Activated T-helper 1 cell treated with anti-CD3 and anti-CD28 coated beads, Interleukin-12 subunit alpha, Interleukin-12 subunit beta, Interleukin-2, Interleukin-4 antibody, amounts not matched to agents 30 ng/mL and 10 ng/mL and 1 ng/mL, durations not matched to agents 14 hours and 24 hours and 36 hours (primary cell): ENCODE measurements at regions of chr11 and their contacts with region 1.

Region 1: DNA sequence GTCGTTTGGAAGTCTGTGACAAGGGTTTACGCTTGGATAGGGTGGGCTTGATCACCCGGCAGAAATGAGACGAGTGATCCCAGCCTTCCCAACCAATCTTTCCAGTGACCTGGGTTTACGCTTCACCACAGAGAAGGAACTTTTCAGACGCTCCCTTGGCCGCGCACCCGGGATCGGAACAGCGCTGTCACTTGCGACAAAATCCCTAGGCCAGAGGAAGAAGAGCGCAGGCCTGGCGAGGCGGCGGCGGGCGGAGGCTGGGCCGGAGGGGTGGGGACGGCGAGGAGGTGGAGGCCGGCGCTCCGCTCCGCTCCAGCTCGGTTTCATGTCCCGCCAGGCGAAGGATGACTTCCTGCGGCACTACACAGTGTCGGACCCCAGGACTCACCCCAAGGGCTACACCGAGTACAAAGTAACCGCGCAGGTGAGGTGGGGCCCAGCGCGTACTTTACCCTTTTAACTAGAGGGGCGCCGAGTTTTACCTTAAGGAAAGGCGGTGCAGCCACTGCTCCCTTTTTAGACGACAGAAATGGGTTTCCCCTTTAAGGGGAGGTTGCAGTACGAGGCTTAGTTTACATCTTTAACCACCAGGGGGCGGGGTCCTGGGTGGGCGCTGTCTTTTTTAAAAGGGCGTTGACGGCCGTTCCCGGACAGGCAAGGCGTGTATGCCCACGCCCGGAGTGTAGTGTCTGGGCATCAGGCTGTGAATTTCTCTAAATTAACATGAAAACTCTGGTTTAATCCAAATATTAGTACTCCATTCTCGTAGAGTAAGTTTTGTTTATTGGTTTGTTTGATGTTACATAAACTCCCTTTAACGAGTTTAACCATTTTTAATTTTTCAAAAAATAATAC is at the start of gene SNX15:
- DNase-seq: peak; percentile 91
- H3K4me3 Mint-ChIP-seq: peak within 1 kb of the TSS; percentile 83
- H3K27ac Mint-ChIP-seq: peak within 1 kb of the TSS; percentile 83
- H3K4me1 Mint-ChIP-seq: peaks cover 23% of the 10 kb centered on the region
- H3K27me3 Mint-ChIP-seq: no peaks in the 10 kb centered on the region
- total RNA-seq, gene SNX15: 19.9 and 30.9 TPM in 2 replicates

Region 2: GRCh38 chr11:64810271-64810890 is 217.1 kb before region 1 on chr11 and contains the start of gene MEN1:
- intact Hi-C with region 1: loop called (anchors 1 kb)
- DNase-seq: peak; percentile 67
- H3K4me3 Mint-ChIP-seq: peak within 1 kb of the TSS; percentile 95
- H3K27ac Mint-ChIP-seq: peak within 1 kb of the TSS; percentile 89
- H3K4me1 Mint-ChIP-seq: peaks cover 22% of the 10 kb centered on the region
- H3K27me3 Mint-ChIP-seq: peaks cover 5% of the 10 kb centered on the region
- total RNA-seq, gene MEN1: 39.6 and 43.8 TPM in 2 replicates

Region 3: DNA sequence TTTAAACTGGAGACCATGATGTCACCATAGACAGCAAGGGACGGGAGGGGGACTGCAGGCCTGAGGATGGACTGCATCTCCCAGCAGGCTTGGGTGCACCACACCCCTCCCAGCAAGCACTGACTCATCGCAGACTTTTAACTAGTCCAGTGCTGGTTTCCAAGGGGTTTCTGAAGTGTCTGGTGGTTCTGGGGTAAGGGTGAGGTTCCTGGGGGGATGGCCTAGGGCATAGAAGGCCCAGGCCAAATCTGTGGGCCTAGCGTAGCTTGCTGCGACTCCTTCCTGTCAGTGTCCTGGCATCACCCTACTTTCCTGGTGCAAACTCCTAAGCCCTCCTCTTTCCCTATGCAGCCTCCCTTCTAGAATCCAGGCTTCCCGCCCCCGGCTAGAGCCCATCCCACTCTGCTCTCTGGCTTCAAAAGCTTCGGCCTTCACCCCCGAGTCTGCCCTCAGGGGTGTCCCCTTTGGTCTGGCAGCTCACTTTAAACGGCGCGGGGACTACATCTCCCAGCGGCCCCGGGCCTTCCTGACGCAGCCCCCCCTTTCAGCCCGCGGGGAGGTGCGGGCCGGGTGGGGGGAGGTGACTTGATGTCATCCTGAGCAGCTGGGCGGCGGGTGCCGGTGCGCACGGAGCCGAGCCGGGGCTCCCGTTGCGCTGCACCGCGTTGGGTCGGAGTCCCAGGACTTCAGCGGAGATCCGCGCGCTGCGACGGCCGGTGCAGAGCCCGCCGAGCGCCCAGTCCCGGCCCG is 103.2 kb before region 1 on chr11 and contains the start of gene PPP2R5B:
- intact Hi-C with region 1: loop called (anchors 1 kb)
- DNase-seq: peak; percentile 89
- H3K4me3 Mint-ChIP-seq: peak within 1 kb of the TSS; percentile 93
- H3K27ac Mint-ChIP-seq: peak within 1 kb of the TSS; percentile 97
- H3K4me1 Mint-ChIP-seq: peaks cover 20% of the 10 kb centered on the region
- H3K27me3 Mint-ChIP-seq: no peaks in the 10 kb centered on the region
- total RNA-seq, gene PPP2R5B: 7.3 and 14.0 TPM in 2 replicates

Region 4: GRCh38 chr11:65003282-65003681 is 24.2 kb before region 1 on chr11:
- intact Hi-C with region 1: no loop called
- DNase-seq: no peak
- H3K4me3 Mint-ChIP-seq: no peak overlapping the region
- H3K27ac Mint-ChIP-seq: no peak overlapping the region
- H3K4me1 Mint-ChIP-seq: peaks cover 8% of the 10 kb centered on the region
- H3K27me3 Mint-ChIP-seq: no peaks in the 10 kb centered on the region

Region 5: DNA sequence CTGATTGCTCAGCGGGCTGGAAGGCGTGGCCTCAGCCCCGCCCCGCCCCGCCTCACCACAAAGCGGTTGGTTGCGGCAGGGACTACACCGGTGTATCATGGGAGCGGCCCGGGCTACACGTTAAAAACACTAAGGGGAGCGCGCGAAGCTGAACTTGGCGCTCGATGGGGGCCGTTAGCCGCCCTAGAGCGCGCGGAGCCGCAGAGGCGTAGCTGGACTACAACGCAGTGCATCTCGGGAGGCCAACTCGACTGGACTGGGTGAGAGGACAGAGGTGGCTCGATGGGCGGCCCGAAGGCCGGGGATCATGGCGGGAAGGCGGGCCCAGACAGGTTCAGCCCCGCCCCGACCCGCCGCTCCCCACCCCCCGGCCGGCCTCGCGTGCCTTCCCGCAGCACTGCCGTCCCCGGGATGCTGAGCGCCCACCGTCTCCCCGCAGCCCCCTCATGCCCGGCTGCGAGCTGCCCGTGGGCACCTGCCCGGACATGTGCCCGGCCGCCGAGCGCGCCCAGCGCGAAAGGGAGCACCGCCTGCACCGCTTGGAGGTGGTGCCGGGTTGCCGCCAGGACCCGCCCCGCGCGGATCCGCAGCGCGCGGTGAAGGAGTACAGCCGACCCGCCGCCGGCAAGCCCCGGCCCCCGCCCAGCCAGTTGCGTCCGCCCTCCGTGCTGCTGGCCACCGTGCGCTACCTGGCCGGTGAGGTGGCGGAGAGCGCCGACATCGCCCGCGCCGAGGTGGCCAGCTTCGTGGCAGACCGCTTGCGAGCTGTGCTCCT is 13.6 kb after region 1 on chr11 and contains the start of gene SAC3D1:
- intact Hi-C with region 1: loop called (anchors 1 kb)
- DNase-seq: peak; percentile 90
- H3K4me3 Mint-ChIP-seq: peak within 1 kb of the TSS; percentile 90
- H3K27ac Mint-ChIP-seq: peak within 1 kb of the TSS; percentile 93
- H3K4me1 Mint-ChIP-seq: peaks cover 19% of the 10 kb centered on the region
- H3K27me3 Mint-ChIP-seq: no peaks in the 10 kb centered on the region
- total RNA-seq, gene SAC3D1: 17.4 and 17.7 TPM in 2 replicates

Region 6: GRCh38 chr11:65078151-65078550 is 50.7 kb after region 1 on chr11:
- intact Hi-C with region 1: loop called (anchors 1 kb)
- DNase-seq: peak; percentile 61
- H3K4me3 Mint-ChIP-seq: peak overlapping the region; percentile 37
- H3K27ac Mint-ChIP-seq: peak overlapping the region; percentile 71
- H3K4me1 Mint-ChIP-seq: peaks cover 53% of the 10 kb centered on the region
- H3K27me3 Mint-ChIP-seq: no peaks in the 10 kb centered on the region

Region 7: DNA sequence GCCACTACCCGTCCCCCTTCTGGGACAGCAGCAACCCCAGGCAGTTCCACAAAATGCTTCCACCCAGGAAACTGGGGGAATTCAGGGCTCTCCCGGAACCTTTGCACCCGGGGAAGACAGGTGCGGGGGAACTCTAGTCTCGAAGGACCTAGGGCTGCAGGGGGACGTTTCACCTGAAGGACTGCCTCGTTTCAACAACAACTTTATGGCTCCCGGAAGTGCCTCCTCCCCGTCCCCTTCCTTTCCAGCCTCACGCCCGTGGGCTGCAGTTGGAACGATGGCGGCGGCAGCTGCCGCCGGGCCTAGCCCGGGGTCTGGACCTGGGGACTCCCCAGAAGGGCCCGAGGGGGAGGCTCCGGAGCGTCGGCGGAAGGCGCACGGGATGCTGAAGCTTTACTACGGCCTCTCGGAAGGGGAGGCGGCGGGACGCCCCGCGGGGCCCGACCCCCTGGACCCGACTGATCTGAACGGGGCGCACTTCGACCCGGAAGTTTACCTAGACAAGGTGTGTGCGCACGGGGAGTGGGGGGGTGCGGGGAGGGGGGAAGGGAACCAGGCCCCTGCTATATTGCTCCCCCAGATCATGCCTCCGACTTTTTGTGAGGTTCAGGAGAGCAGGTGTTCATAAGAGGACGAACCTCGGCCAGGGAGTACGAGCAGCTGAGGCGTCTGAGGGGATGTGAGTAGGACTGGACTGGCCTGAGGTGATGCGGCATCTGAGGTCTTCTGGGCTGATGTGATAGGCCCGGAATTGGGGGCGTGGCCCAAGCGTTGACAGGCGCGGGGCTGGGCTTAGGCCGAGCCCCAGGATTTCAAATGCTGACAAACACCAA is 68.8 kb after region 1 on chr11 and contains the start of gene VPS51:
- intact Hi-C with region 1: loop called (anchors 1 kb)
- DNase-seq: peak; percentile 80
- H3K4me3 Mint-ChIP-seq: peak within 1 kb of the TSS; percentile 91
- H3K27ac Mint-ChIP-seq: peak within 1 kb of the TSS; percentile 94
- H3K4me1 Mint-ChIP-seq: peaks cover 11% of the 10 kb centered on the region
- H3K27me3 Mint-ChIP-seq: no peaks in the 10 kb centered on the region
- total RNA-seq, gene VPS51: 137 and 139 TPM in 2 replicates